Activated T-helper 2 cell treated with anti-CD3 and anti-CD28 coated beads, Interferon-gamma antibody, Interleukin-2, Interleukin-4, amounts not matched to agents 10 μg/mL and 5 μg/mL and 100 μg/mL, durations not matched to agents 14 hours and 24 hours and 36 hours (primary cell): ENCODE measurements at regions of chr5 and their contacts with region 1.

Region 1: DNA sequence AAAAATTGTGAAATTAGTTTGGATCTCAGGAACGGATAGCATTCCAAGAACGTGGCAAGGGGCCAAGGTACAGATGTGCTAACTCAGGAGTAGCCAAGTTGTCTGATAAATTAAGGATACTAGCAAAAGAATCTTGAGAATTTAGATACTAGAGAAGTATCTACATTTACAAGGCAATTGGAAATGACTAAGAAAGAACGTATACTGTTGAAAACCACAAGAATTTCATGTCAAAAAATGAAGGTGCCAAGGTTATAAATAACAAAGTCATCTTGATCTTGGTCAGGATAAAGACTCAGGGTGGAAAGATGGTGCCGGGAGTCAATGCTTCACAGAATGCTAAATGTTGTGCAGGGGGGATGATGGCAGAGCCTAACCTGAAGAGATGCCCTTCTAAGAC is 19.2 kb downstream of the CAPSL start:
- DNase-seq: no peak
- H3K4me3 Mint-ChIP-seq: no peak overlapping the region
- H3K27ac Mint-ChIP-seq: peak overlapping the region; percentile 83
- H3K4me1 Mint-ChIP-seq: peaks cover 37% of the 10 kb centered on the region
- H3K27me3 Mint-ChIP-seq: no peaks in the 10 kb centered on the region

Region 2: DNA sequence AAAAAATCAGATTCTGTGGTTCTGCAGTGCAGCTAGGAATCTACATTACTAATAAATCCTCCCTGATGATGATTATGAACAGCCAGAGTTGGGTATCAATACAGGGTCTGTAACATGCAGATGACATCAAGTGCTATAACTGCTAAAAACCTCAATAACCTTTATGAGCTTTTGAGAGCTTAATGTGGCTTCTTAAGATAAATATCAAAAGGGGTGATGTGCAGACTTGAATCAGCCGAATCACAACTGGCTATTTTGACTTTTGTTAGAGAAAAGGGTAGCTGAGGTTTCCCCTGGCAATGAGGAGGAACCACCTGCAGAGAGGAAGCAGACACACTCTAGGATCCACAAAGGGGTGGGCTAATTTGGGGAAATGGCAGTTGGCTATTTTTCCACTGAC is 11.0 kb before region 1 on chr5:
- intact Hi-C with region 1: loop called (anchors 1 kb)
- DNase-seq: no peak
- H3K4me3 Mint-ChIP-seq: no peak overlapping the region
- H3K27ac Mint-ChIP-seq: peak overlapping the region; percentile 89
- H3K4me1 Mint-ChIP-seq: peaks cover 61% of the 10 kb centered on the region
- H3K27me3 Mint-ChIP-seq: no peaks in the 10 kb centered on the region

Region 3: DNA sequence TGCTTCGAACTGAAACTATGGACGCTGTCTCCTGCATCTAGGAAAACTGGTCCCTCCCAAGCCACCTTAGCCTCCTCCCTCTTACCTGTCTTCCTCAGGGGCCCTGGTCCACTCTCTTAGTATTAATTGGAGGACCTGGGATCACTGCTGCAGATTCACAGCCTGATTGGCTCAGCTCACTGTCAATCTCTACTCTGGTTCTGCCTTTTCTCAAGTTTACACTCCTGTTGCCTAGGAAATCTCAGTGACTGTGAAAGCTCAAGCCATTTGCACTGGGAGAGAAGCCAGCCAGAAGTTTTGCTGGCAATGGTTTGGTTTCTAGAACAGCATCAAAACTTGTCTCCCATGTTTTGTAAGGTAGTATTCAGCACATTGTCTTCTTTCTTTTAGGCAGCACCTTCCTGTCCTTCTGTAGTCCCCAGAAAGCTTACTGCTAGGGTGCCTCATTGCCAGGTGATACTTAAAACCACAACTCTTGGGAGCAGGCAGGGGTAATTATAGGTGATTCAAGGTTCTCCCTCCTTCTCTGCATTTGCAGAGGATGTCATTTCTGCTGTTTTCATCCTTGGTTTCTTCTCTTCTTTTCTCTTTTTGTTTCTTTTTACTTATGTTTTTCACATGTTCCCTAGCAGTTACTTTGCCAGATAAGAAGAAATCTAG is 19.5 kb after region 1 on chr5 and contains the start of gene CAPSL:
- intact Hi-C with region 1: no loop called
- DNase-seq: no peak
- H3K4me3 Mint-ChIP-seq: no peak within 1 kb of the TSS
- H3K27ac Mint-ChIP-seq: no peak within 1 kb of the TSS
- H3K4me1 Mint-ChIP-seq: no peaks in the 10 kb centered on the region
- H3K27me3 Mint-ChIP-seq: peaks cover 11% of the 10 kb centered on the region
- total RNA-seq, gene CAPSL: 0.50 and 1.2 TPM in 2 replicates